Posterior vena cava (tissue), 2 donors: ENCODE measurements at regions of chr2 and their contacts with region 1.

Region 1: DNA sequence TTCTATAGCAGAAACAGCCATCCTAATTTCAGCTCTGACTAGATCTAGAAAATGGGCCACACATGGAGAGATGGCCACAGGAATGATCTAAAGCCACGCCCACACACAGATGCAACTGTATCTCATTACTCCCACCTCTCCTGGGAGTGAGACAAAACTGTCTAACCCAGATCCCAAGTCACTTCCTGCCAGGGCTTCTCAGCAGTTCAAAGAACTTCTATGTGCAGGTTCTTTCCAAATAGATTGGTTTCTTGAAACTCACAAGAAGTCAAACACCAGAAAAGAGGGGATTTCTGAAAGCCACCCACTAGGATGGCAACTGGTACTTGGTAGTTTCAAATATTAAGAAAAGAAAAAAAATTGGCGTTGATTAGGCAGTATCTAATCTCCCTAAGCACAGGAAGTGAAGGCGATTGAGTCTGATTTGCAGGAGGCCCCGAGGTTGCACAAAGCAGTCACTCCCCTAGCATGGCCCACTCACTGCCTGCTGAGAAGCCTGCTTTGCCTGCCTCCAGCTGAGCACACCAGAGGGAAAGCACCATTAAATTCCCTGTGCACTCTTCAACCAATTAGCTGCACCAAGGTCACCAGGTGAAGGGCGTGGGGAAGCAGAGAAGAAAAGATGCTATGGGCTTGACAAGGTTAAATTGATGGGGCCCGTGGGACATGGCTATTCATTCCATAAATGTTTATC is 51.1 kb downstream of the PAPOLG start:
- DNase-seq: no peak

Region 2: DNA sequence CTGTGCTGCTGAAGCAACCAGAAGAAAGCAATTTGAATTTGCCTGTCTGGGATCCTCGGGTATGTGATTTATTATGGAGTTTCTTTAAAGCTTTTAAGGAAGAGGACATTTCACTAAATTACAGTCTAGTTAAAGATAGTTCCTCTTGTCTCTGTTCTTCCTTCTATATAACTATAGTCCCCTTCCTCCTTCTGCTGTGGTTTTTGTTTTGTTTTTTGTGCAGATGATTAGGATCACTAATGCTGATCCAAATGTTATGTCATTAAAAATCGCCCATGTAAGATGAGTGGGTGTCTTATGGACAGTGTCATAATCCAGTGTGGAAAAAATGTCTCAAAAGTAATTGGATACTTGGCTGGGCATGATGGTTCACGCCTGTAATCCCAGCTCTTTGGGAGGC is 26.4 kb before region 1 on chr2:
- intact Hi-C with region 1: loop called in 1 of 2 experiments (anchors 1 kb)
- DNase-seq: no peak